ENCODE measurements at regions of chr21 and their contacts with region 1.

Region 1: DNA sequence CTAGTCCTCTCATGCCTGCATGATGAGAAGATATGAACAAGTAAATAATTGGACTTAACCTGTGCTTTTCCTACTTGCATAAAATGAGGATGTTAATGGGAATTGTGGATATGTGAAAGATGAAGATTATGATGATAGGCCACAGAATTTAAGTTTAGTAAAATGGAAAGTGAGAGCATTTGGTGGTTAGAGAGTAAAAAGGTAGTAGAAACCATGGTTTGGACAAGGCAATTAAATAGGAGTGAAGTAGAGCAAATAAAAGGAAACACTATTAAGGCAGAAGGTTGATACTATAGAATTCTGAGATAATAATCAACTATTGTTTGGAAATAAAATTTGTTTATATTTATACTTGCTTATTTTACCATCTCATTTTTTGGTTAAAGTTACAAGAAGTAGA is 1162.5 kb downstream of the MRPL39 start:
- DNase-seq: no peak
- ATAC-seq: no peak
- H3K4me3 ChIP-seq: no peak overlapping the region
- H3K27ac ChIP-seq: no peak overlapping the region
- H3K4me1 ChIP-seq: no peaks in the 10 kb centered on the region
- H3K27me3 ChIP-seq: no peaks in the 10 kb centered on the region
- CTCF ChIP-seq: no peak
- POLR2A ChIP-seq: no peak

Region 2: DNA sequence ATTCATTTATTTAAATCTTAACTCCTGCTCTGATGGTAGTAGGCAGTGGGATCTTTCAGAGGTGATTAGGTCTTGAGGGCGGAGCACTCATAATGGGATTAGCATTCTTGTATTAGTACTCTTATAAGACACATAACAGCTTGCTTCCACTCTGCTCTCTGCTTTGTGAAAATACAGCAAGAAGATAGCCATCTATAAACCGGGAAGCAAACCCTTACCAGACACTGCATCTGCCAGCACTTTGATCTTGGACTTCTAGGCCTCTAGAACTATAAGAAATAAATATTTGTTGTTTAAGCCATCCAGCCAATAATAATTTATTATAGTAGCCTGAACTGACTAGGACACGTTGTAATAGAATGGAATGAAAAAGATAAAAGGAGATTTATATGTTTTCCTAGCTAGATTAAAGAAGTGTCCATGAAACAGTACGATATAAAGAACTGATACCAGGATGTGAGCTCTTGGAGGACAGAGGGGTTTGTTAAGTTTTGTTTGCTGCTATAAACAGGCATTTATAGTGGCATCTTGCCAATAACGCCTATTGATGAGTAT is 292.6 kb after region 1 on chr21:
- intact Hi-C with region 1: loop called in 1 of 10 experiments (anchors 10 kb)
- DNase-seq: no peak
- ATAC-seq: no peak
- H3K4me3 ChIP-seq: no peak overlapping the region
- H3K27ac ChIP-seq: no peak overlapping the region
- H3K4me1 ChIP-seq: no peaks in the 10 kb centered on the region
- H3K27me3 ChIP-seq: no peaks in the 10 kb centered on the region
- CTCF ChIP-seq: no peak
- POLR2A ChIP-seq: no peak